Colonic mucosa (tissue), 4 donors: ENCODE measurements at regions of chr11 and their contacts with region 1.

Region 1: GRCh38 chr11:83292709-83293456 is 6.7 kb upstream of the CCDC90B start:
- DNase-seq: peak; percentile 22
- H3K4me3 ChIP-seq: no peak overlapping the region
- H3K27ac ChIP-seq: no peak overlapping the region
- H3K4me1 ChIP-seq: no peaks in the 10 kb centered on the region
- H3K27me3 ChIP-seq: no peaks in the 10 kb centered on the region
- CTCF ChIP-seq: peak; percentile 46

Region 2: DNA sequence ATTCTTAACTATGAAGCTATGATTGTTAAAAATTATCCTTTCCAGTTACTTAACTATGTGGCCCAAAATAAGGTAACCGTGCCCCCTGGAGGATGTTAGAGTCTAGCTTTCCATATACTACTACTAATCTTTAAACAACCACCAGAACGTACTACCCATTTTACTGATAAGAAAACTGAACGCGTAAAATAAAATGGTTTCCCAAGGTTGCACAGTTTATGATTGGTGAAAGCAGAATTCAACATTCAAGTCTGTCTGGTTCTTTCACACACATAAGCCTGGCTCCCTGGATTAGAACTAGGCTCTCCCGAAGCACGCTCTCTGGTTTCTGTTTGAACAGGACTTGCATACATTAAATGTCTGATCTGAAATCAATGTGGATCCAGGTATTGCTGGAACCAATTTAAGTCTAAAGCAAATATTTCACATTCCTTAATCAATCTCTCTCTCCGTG is 431.2 kb after region 1 on chr11:
- intact Hi-C with region 1: loop called (anchors 10 kb)
- DNase-seq: no peak
- H3K4me3 ChIP-seq: no peak overlapping the region
- H3K27ac ChIP-seq: no peak overlapping the region
- H3K4me1 ChIP-seq: no peaks in the 10 kb centered on the region
- H3K27me3 ChIP-seq: no peaks in the 10 kb centered on the region
- CTCF ChIP-seq: no peak

Region 3: DNA sequence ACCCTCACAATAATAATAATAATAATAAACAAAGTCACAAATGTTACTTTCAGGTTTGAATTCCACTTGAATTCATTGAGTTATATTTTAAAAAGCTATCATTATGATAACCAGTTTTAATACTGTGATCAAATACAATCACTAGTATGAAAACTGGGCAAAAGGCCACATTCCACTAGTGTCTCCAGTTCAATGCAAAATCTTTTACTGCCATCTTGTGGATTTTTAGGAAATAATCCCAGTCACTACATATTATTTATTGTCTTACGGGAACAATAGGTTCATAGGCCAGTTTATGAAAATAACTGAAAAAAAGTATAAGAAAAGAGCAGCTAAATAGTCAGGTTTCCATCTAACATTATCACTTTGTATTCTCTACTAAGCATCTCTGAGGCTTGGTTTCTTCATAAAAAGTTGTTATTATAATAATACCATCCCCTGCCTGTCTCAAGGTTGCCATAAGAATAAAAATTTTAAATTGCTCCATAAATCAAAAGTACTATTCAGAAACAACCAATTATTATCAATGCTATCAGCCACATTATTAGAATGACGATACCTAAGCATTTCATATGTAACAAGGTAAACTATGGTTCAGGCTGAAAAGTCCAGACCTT is 527.2 kb after region 1 on chr11:
- intact Hi-C with region 1: loop called (anchors 10 kb)
- DNase-seq: no peak
- H3K4me3 ChIP-seq: no peak overlapping the region
- H3K27ac ChIP-seq: no peak overlapping the region
- H3K4me1 ChIP-seq: no peaks in the 10 kb centered on the region
- H3K27me3 ChIP-seq: no peaks in the 10 kb centered on the region
- CTCF ChIP-seq: peak; percentile 26